AG04449 (cell line): ENCODE measurements at regions of chr12 and their contacts with region 1.

Region 1: DNA sequence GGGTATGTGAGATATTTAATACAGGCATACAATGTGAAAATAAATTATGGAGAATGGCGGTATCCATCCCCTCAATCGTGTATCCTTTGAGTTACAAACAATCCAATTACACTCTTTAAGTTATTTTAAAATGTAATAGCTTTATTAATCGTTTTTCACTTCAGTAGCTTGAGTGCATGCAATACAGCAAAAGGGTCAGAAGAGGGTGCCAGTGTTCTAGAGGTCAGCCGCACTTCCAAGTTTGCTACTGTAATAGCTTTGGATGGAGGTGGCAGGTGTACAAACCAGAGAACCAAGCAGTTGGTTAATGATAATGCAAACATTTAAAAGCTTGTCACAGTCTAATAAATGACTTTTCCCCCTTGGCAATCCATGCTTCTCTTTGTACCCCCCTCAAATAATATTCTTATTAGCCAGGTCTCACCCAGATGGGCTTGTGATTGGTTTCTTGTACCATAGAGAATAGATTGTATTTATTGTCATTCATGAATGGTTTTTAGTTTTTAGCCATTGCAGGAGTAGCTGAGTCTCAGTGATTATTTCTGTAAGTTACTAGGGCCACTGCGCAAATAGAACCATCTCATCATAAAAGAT is 127.0 kb downstream of the ERC1 start:
- DNase-seq: peak; percentile 19
- H3K4me3 ChIP-seq: no peak overlapping the region
- CTCF ChIP-seq: peak; percentile 83

Region 2: GRCh38 chr12:724194-724855 is 393.7 kb before region 1 on chr12:
- CTCF ChIA-PET with region 1: no interaction called
- POLR2A ChIA-PET with region 1: no interaction called
- DNase-seq: no peak
- H3K4me3 ChIP-seq: no peak overlapping the region
- CTCF ChIP-seq: no peak

Region 3: DNA sequence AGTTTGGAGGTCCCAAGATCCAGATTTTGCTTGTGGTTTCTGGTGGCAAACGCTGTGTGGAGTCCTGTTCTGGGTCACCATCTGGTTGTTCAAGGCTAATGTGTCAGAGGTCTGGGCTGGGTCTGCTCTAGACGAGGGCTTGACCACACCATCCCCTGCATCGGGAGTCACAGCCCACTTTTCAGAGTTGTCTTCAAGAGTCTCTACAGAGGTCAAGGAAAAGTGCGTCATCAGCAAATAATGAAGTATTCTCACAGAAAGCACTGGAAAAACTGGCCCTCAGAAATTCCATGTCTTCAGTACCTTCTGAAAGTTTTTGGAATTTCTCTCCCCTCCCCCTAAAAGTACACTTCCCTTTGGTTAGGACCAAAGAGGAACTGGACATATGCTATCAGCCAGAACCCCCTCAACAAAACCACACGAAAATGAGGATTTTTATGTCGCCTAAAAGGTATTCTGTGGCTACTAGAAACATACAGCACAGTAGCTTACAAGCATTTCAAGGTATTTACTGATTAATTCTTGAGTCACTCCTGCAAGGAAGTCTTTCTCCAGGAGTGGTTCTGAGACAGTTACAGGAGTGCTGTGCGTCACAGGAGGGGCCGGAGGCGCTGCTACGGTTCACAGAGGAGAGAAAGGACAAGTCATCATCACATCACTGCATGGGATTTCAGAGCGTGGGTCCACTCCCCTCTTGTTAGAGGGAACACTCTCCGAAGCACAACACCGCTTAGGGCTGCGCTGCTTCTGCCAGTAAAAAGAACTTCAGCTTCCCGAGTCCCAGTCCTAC is 204.0 kb before region 1 on chr12:
- CTCF ChIA-PET with region 1: no interaction called
- POLR2A ChIA-PET with region 1: no interaction called
- DNase-seq: peak; percentile 37
- H3K4me3 ChIP-seq: no peak overlapping the region
- CTCF ChIP-seq: no peak

Region 4: DNA sequence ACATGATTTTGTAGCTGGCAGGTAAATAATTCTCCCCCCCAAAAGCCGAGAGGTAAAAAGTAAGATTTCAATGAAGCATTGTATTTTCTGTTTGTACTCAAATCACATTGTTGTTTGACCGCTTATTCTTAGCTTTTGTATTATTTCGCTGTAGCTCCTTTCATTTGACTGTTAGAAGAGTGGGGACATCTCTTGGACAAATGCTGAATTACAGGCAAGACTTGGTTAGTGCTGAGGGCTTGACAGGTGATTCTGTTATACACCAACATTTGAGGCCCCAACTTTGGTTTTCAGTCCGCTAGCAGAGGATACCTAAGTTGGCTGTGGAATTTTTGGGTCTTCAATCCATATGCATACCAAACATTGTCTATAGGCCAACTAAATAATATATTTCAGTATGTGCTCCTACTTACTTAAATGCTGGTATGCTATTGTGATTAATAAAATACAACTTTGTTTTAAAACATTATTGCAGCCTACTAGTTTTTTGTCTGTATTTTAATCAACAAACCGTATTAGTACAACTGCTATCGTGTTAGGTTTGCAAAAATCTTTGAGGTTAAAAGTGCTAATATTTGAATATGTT is 24.8 kb before region 1 on chr12:
- CTCF ChIA-PET with region 1: interaction called, 12 read pairs
- POLR2A ChIA-PET with region 1: no interaction called
- DNase-seq: no peak
- H3K4me3 ChIP-seq: no peak overlapping the region
- CTCF ChIP-seq: peak; percentile 68

Region 5: GRCh38 chr12:1252758-1253157 is 134.7 kb after region 1 on chr12:
- CTCF ChIA-PET with region 1: interaction called, 11 read pairs
- POLR2A ChIA-PET with region 1: no interaction called
- DNase-seq: no peak
- H3K4me3 ChIP-seq: no peak overlapping the region
- CTCF ChIP-seq: no peak

Region 6: GRCh38 chr12:1367331-1368291 is 249.5 kb after region 1 on chr12:
- CTCF ChIA-PET with region 1: interaction called, 16 read pairs
- POLR2A ChIA-PET with region 1: no interaction called
- DNase-seq: no peak
- H3K4me3 ChIP-seq: no peak overlapping the region
- CTCF ChIP-seq: no peak

Region 7: DNA sequence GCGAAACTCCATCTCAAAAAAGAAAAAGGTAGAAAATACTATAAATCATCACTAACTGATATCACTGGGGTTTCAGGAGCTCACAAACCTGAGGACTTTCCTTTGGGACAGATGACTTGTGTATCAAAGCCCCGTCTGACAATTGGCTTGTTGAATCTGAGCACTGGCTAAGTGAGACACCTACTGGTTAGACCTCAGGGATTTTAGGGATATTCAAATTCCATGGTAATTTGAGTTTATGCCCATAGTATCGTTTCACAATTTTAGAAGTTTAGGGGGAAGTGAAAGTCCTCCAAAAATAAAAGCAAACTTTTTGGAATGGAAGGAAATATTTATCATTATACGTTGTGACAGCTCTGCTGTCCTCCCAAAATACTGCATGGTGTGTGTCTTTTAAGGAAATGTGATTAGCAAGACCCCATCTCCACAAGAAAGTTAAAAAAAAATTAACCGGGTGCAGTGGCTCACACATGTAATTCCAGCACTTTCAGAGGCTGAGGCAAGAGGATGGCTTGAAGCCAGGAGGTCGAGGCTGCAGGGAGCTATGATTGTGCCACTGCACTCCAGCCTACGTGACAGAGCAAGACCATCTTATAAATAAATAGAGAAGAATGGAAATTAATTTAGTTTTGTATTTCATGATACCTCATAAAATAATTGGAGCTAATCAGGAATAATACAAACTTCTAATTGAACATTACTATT is 427.1 kb after region 1 on chr12:
- CTCF ChIA-PET with region 1: interaction called, 39 read pairs
- POLR2A ChIA-PET with region 1: interaction called, 3 read pairs
- DNase-seq: no peak
- H3K4me3 ChIP-seq: no peak overlapping the region
- CTCF ChIP-seq: peak; percentile 8

Region 8: DNA sequence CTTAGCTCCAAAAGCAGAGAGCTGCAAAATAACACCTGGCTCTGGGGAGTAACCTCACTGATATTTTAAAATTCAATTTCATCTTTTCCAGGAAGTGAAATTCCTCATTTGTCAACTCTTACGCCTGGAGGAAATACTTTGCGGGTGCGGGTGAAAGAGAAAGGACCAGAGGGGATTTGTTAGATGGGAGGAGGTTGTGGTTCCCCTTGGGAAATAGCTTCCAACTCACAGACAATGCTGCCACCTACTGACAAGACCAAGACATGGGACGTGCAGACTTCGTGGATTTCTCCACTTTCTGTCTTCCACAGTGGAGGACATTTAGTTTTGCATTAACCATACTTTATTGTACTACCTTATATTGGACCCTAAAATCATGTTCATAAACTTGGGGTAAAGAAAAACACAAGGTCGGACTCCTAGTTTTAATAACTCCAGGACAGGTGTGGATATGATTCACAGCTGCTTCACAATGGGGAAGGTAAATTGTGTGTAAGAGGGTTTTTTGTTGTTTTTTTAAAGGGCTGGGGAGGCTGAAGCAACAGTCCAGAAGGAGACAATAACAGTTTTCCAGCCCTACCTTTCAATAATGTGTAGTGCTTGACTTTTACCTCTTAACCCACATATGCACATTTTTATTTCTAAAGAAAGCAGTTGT is 465.5 kb after region 1 on chr12:
- CTCF ChIA-PET with region 1: interaction called, 207 read pairs
- POLR2A ChIA-PET with region 1: interaction called, 5 read pairs
- DNase-seq: no peak
- H3K4me3 ChIP-seq: peak overlapping the region; percentile 24
- CTCF ChIP-seq: peak; percentile 84

Region 9: GRCh38 chr12:1611803-1612572 is 493.9 kb after region 1 on chr12:
- CTCF ChIA-PET with region 1: interaction called, 18 read pairs
- POLR2A ChIA-PET with region 1: no interaction called
- DNase-seq: peak; percentile 69
- H3K4me3 ChIP-seq: peak overlapping the region; percentile 46
- CTCF ChIP-seq: no peak